Naive thymus-derived CD4-positive, alpha-beta T cell (primary cell): ENCODE measurements at regions of chr5 and their contacts with region 1.

Region 1: DNA sequence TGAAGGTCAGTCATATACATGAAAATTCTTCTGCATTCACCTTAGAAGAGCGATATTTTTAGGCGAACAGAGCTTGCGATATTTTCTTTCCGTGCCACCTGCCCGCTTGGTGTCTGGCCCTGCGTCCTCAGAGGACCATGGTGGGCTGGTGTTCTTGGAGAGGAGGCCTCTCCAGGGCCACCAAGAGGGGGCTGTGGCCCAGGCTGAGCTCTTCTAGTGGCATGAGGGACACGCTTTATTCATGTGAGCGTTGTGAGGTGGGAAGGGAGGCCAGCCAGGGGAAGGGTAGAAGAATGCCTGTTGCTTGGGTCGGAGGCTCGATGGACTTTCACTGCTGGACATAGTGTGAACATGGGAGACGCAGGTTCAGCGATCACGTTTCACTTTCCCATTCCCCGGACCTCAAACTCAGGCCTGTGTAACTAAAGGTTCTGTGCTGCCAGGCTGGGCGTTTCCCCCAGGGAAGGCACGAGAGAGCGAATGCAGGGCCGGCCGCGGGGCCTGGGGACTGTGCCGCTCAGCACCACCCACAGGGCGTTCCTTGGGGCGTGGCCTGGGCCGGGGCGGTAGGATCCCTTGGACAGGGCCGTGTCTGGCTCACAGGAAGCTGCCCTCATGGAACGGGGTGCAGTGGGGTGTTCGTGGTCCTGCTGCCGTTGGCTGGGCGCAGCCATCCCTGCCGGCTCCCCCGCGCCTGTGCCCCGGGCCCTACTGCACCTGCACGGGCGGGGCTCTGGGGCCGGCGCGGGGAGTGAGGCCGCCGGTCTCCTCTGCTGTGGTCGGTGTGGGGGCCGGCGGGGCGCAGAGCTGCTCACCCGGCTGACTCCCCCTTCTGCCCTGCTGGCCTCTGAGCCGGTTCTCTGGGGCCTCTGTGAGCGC is 40.7 kb upstream of the CLPTM1L start:
- DNase-seq: peak; percentile 67 to 89 (median 78)
- ATAC-seq: peak; percentile 91
- H3K4me3 ChIP-seq: peak overlapping the region; percentile 94
- H3K4me3 Mint-ChIP-seq: peak overlapping the region; percentile 90 to 100 (median 98)
- H3K27ac ChIP-seq: peak overlapping the region; percentile 98
- H3K27ac Mint-ChIP-seq: peak overlapping the region; percentile 98 to 100 (median 99)
- H3K4me1 ChIP-seq: peaks cover 13 to 24% of the 10 kb centered on the region in 2 donors
- H3K4me1 Mint-ChIP-seq: peaks cover 17 to 44% (median 26%) of the 10 kb centered on the region in 7 donors
- H3K27me3 ChIP-seq: no peaks in the 10 kb centered on the region
- H3K27me3 Mint-ChIP-seq: peaks cover 0 to 17% (median 0%) of the 10 kb centered on the region in 5 donors

Region 2: GRCh38 chr5:1105350-1106265 is 280.0 kb before region 1 on chr5:
- CTCF ChIA-PET with region 1: no interaction called
- POLR2A ChIA-PET with region 1: interaction called, 5 read pairs
- intact Hi-C with region 1: loop called (anchors 1 to 5 kb)
- DNase-seq: peak; percentile 50 to 86 (median 83)
- ATAC-seq: peak; percentile 82
- H3K4me3 ChIP-seq: peak overlapping the region; percentile 77
- H3K4me3 Mint-ChIP-seq: peak overlapping the region; percentile 77 to 94 (median 88)
- H3K27ac ChIP-seq: peak overlapping the region; percentile 89
- H3K27ac Mint-ChIP-seq: peak overlapping the region; percentile 85 to 100 (median 97)
- H3K4me1 ChIP-seq: peaks cover 37 to 79% of the 10 kb centered on the region in 2 donors
- H3K4me1 Mint-ChIP-seq: peaks cover 48 to 90% (median 69%) of the 10 kb centered on the region in 7 donors
- H3K27me3 ChIP-seq: no peaks in the 10 kb centered on the region
- H3K27me3 Mint-ChIP-seq: no peaks in the 10 kb centered on the region

Region 3: DNA sequence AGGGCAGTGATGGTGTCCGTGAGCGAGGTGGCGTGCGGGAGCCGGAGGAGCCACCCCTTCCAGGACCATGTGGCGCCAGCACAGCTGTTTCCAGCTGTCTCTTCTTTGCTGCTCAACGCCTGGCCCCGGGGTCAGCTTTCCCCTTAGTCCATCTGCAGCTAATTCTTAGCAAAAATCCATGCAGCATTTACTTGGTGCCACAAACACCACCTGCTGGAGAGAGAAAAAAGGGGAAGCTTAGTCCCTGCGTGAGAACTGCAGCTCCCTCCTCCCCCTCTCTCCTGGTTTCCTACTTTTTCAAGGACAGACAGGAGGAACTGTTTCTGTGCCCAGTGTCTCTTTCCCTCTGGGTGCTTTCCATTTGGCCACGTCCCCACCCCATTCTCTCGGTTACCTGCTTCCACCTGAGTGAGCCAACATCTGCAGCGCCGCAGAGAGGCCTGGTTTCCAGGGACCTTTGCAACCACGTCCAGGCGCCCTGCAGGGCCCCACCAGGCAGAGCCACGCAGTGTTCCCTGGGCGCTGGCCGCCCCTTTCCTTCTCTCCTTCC is 180.9 kb before region 1 on chr5:
- CTCF ChIA-PET with region 1: no interaction called
- POLR2A ChIA-PET with region 1: no interaction called
- intact Hi-C with region 1: no loop called
- DNase-seq: no peak
- ATAC-seq: no peak
- H3K4me3 ChIP-seq: no peak overlapping the region
- H3K4me3 Mint-ChIP-seq: no peak overlapping the region
- H3K27ac ChIP-seq: no peak overlapping the region
- H3K27ac Mint-ChIP-seq: peak overlapping the region in 1 of 9 donors; percentile 67
- H3K4me1 ChIP-seq: no peaks in the 10 kb centered on the region
- H3K4me1 Mint-ChIP-seq: peaks cover 0 to 5% (median 0%) of the 10 kb centered on the region in 7 donors
- H3K27me3 ChIP-seq: no peaks in the 10 kb centered on the region
- H3K27me3 Mint-ChIP-seq: peaks cover 0 to 9% (median 0%) of the 10 kb centered on the region in 5 donors

Region 4: GRCh38 chr5:1255081-1255561 is 130.5 kb before region 1 on chr5:
- CTCF ChIA-PET with region 1: interaction called, 3 read pairs
- POLR2A ChIA-PET with region 1: interaction called, 11 read pairs
- intact Hi-C with region 1: loop called in 1 of 2 experiments (anchors 2 kb)
- DNase-seq: peak; percentile 31 to 79 (median 71)
- ATAC-seq: peak; percentile 83
- H3K4me3 ChIP-seq: peak overlapping the region; percentile 48
- H3K4me3 Mint-ChIP-seq: peak overlapping the region; percentile 76 to 97 (median 90)
- H3K27ac ChIP-seq: peak overlapping the region; percentile 57
- H3K27ac Mint-ChIP-seq: peak overlapping the region; percentile 30 to 93 (median 89)
- H3K4me1 ChIP-seq: peaks cover 9 to 18% of the 10 kb centered on the region in 2 donors
- H3K4me1 Mint-ChIP-seq: peaks cover 7 to 23% (median 20%) of the 10 kb centered on the region in 7 donors
- H3K27me3 ChIP-seq: no peaks in the 10 kb centered on the region
- H3K27me3 Mint-ChIP-seq: no peaks in the 10 kb centered on the region

Region 5: DNA sequence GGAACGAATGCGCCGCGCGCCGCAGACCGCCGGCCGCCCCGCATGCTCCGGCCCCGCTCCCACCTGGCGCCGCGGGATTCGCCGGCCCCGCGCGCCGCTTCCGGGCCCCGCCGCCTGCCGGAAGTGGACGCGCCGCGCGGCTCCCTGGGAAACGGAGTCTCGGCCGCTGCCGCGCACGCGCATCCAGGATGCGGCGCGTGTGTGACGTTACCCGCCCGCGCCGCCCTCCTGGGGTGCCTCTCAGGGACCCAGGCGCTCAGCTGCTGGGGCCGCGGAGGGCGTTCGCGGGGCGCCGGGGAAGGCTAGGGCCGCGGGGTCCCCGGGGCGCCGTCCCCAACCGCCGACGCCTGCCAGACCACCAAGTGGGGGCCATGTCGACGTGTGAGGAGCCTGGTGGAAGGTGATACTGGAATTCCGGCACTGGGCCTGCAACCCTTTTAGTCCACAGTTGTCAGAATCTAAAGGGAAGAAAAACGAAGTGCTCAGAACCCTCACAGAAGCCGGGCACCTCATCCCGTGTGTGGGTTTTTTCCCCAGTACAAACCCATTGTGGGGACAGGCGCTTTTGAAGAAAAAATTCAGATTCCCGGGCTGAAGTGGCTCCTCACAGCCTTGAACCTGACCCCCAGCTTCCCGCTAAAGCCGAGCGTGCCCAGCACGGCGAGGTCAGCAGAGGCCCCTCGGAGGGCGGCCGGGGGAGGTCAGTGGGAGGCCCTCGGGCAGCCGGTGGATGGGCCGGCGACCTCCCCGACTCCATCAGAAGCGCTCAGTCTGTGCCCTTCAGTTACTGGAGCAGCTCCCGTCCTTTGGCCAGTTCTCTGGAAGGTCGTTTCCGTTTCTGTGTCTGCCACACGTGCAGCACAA is 40.4 kb before region 1 on chr5 and contains the start of gene CLPTM1L:
- CTCF ChIA-PET with region 1: no interaction called
- POLR2A ChIA-PET with region 1: interaction called, 35 read pairs
- intact Hi-C with region 1: loop called (anchors 1 kb)
- DNase-seq: peak; percentile 82 to 93 (median 90)
- ATAC-seq: peak; percentile 95
- H3K4me3 ChIP-seq: peak within 1 kb of the TSS; percentile 79
- H3K4me3 Mint-ChIP-seq: peak within 1 kb of the TSS; percentile 84 to 95 (median 91)
- H3K27ac ChIP-seq: peak within 1 kb of the TSS; percentile 97
- H3K27ac Mint-ChIP-seq: peak within 1 kb of the TSS; percentile 72 to 95 (median 88)
- H3K4me1 ChIP-seq: peaks cover 12 to 18% of the 10 kb centered on the region in 2 donors
- H3K4me1 Mint-ChIP-seq: peaks cover 21 to 44% (median 33%) of the 10 kb centered on the region in 7 donors
- H3K27me3 ChIP-seq: no peaks in the 10 kb centered on the region
- H3K27me3 Mint-ChIP-seq: no peaks in the 10 kb centered on the region
- total RNA-seq, gene CLPTM1L: 64.9 to 104 (median 71.9) TPM

Region 6: DNA sequence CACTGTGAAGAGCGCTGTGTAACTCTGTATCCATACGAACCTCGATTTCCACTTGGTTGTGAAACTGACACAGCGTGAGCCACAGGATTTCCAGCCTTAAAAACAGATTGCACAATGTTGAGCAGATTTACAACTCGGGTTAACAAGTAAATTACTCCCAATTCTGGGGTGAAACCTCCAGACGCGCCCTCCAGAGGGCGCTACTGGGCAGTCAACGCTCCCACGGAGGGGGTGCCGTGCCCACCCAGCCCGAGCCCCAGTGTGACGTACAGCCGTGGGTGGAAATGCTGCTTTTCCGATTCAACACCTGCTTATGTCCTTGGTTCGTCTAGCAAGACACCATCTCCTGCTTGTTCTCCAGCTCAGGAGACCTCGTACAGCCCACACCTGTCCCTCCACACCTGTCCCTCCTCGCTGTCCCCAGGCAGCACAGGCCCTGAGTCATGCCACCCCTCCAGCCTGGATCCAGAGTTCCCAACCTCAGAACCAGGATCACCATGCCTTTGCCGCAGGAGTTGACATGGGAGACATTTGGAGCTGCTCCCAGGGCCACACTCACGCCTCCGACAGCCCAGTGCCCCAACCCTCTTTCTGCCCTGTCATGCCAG is 94.1 kb after region 1 on chr5:
- CTCF ChIA-PET with region 1: no interaction called
- POLR2A ChIA-PET with region 1: no interaction called
- intact Hi-C with region 1: loop called in 1 of 2 experiments (anchors 5 kb)
- DNase-seq: peak in 8 of 9 donors; percentile 29 to 49 (median 39)
- ATAC-seq: peak; percentile 56
- H3K4me3 ChIP-seq: no peak overlapping the region
- H3K4me3 Mint-ChIP-seq: no peak overlapping the region
- H3K27ac ChIP-seq: no peak overlapping the region
- H3K27ac Mint-ChIP-seq: peak overlapping the region in 1 of 9 donors; percentile 9
- H3K4me1 ChIP-seq: no peaks in the 10 kb centered on the region
- H3K4me1 Mint-ChIP-seq: peaks cover 0 to 15% (median 5%) of the 10 kb centered on the region in 7 donors
- H3K27me3 ChIP-seq: no peaks in the 10 kb centered on the region
- H3K27me3 Mint-ChIP-seq: no peaks in the 10 kb centered on the region

Region 7: DNA sequence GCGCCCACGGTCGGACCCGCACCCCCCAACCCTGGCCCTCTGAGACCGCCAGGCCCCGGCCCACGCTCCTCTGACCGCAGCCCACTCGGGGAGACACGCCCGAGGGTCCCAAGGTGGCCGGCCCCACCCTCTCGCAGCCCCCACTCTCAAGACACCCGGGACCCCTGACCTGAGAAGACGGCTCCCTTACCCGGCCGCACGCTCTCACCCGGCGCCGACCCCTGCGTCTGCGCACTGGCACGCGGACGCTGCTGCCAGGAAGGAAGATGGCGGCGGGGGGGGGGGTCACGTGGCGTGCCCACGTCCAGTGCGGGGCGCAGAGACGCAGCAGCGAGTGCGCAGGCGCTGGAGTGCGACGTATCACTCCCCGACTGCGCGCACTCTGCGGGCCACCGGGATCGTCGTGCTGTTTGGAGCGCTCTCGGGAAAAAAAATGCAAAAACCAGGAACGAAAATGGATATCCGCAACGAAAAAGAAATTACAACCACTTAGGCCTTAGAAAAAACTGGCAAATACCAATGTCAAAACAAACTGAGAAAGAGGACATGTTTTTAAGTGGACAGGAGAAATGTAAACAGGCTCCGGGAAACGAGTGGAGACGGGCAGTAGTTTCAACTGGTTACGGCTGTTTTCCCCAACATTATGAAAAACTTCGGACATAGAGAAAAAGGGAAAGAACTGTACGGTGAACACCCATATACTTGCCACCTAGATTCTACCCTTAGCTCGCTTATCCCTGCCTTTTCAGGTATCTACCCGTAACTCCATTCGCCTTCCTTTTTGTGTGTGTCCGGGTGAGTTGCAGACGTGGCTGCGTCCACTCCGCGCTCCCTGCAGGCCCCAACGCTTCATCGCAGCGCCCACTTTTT is 414.2 kb after region 1 on chr5 and contains the start of gene MRPL36:
- CTCF ChIA-PET with region 1: no interaction called
- POLR2A ChIA-PET with region 1: interaction called, 6 read pairs
- intact Hi-C with region 1: loop called (anchors 5 kb)
- DNase-seq: peak; percentile 79 to 92 (median 87)
- ATAC-seq: peak; percentile 84
- H3K4me3 ChIP-seq: peak within 1 kb of the TSS; percentile 63
- H3K4me3 Mint-ChIP-seq: peak within 1 kb of the TSS; percentile 93 to 100 (median 99)
- H3K27ac ChIP-seq: peak within 1 kb of the TSS; percentile 88
- H3K27ac Mint-ChIP-seq: peak within 1 kb of the TSS; percentile 95 to 100 (median 99)
- H3K4me1 ChIP-seq: peaks cover 12 to 13% of the 10 kb centered on the region in 2 donors
- H3K4me1 Mint-ChIP-seq: peaks cover 41 to 69% (median 60%) of the 10 kb centered on the region in 7 donors
- H3K27me3 ChIP-seq: no peaks in the 10 kb centered on the region
- H3K27me3 Mint-ChIP-seq: no peaks in the 10 kb centered on the region
- total RNA-seq, gene MRPL36: 14.1 to 52.6 (median 26.8) TPM